ENCODE measurements at regions of chr4 and their contacts with region 1.

Region 1: DNA sequence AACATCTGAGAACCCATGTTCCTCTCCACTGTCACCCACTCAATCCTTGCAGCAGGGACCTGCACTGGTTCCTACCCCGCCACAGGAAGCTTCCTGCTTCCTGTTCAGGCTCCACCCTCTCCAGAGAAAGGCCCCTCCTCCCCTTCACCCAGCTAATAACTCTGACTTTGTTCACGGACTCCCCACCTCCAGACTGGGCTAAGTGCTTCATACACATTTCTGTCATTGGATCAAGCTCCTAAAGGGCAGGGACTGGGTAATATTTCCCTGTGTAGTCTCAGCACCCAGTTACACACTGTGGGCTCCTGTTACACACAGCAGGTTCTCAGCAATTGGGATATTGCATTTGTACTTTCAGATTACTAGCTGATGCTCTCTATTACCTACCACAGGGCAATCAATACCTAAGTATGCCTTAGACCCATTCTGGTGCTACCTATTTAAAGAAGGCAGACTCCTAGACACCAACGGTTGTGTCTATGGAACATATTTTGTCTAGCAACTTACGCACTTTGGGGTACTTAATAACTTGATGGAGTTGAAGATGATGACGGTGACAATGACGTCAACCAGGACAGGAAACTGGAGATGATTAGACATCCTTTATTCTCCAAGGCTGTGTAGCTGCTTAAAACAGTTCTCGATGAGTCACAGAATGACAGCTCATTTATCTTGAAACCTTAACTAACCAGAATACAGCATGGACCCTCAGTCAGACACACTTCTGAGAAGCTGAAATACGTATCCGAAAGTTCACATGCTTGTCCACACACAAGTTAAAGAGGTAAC is 58.1 kb downstream of the MAML3 start:
- DNase-seq: peak; percentile 91
- ATAC-seq: peak; percentile 81
- H3K4me3 Mint-ChIP-seq: peak overlapping the region; percentile 79
- H3K27ac Mint-ChIP-seq: peak overlapping the region; percentile 98
- H3K4me1 Mint-ChIP-seq: peaks cover 89% of the 10 kb centered on the region
- H3K27me3 Mint-ChIP-seq: no peaks in the 10 kb centered on the region
- CTCF ChIP-seq: no peak

Region 2: DNA sequence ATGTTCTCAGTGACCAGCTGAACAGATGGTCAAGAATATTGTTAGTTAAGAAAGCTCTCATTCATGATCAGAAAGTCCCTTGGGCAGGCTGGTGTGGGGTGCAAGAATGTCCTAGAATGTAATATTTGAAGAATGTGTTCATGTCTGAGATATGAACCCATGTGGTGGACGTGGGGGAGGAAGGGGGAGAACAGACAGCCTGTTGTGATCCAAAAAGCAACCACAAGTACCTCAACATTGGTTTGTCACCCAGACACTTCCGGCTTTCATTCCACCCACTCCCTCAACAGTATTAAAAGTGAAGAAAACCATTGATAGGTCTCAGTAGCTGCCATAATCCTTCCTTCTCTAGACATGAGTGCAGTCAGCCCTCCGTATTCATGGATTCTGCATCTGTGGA is 24.1 kb before region 1 on chr4:
- CTCF ChIA-PET with region 1: interaction called, 3 read pairs
- POLR2A ChIA-PET with region 1: interaction called, 25 read pairs
- intact Hi-C with region 1: no loop called
- DNase-seq: peak; percentile 94
- ATAC-seq: peak; percentile 83
- H3K4me3 Mint-ChIP-seq: peak overlapping the region; percentile 63
- H3K27ac Mint-ChIP-seq: peak overlapping the region; percentile 79
- H3K4me1 Mint-ChIP-seq: peaks cover 44% of the 10 kb centered on the region
- H3K27me3 Mint-ChIP-seq: peaks cover 23% of the 10 kb centered on the region
- CTCF ChIP-seq: no peak

Region 3: DNA sequence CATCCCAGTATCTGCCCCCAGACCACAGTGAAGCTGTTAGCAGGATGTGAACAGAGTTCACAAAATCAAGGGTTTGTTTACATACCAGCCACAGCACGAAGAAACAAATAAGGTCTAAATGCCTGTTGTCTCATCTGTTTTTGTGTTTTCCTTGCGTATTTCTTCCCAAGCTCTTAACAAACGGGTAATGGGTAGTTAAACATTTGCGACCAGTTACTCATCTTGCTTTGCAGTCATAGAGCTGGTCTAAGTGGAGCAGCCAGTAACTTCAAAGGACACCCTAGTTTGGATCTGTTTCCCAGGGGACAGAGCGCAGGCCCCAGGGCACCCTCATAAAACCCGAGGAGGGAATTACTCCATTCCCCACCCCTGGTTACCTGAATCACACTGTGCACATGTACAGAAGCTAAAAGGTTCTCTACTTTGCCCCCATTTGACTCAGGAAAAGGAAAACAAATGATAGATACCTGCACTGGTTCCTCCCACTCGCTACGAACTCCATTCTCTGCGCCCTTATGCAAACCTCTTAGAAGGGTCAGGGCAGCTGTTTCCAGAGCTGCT is 10.7 kb before region 1 on chr4:
- CTCF ChIA-PET with region 1: interaction called, 5 read pairs
- POLR2A ChIA-PET with region 1: interaction called, 12 read pairs
- intact Hi-C with region 1: no loop called
- DNase-seq: no peak
- ATAC-seq: no peak
- H3K4me3 Mint-ChIP-seq: no peak overlapping the region
- H3K27ac Mint-ChIP-seq: no peak overlapping the region
- H3K4me1 Mint-ChIP-seq: peaks cover 18% of the 10 kb centered on the region
- H3K27me3 Mint-ChIP-seq: peaks cover 5% of the 10 kb centered on the region
- CTCF ChIP-seq: no peak